Dorsolateral prefrontal cortex (tissue), 120 donors: ENCODE measurements at regions of chr15 and their contacts with region 1.

Region 1: GRCh38 chr15:44738340-44738984 is 2.1 kb downstream of the TRIM69 start:
- DNase-seq: no peak
- H3K4me3 ChIP-seq: no peak overlapping the region
- H3K27ac ChIP-seq: peak overlapping the region in 6 of 59 donors; percentile 18 to 64 (median 52)
- H3K27me3 ChIP-seq: no peaks in the 10 kb centered on the region
- CTCF ChIP-seq: peak; percentile 49 to 86 (median 70)

Region 2: DNA sequence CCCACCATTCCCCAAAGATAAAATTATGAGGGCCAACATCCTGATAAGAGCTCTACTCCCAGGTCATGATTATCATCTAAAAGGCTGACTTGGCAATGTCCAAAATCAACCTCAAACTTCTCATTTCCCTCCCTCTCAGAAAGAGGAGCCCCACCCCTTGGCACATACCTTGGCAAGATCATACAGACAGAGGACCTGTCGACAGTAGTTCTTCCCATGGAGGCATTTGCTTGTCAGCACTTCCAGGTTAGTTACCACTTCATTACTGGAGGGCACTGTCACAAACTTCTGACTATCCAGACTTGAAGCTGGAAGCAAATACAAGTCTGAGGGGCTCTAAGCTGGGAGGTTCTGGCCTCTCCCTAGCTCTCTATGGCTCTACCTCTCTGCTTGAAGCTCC is 163.7 kb before region 1 on chr15:
- intact Hi-C with region 1: loop called in 1 of 2 experiments (anchors 5 kb)
- DNase-seq: no peak
- H3K4me3 ChIP-seq: no peak overlapping the region
- H3K27ac ChIP-seq: no peak overlapping the region
- H3K27me3 ChIP-seq: no peaks in the 10 kb centered on the region
- CTCF ChIP-seq: no peak

Region 3: DNA sequence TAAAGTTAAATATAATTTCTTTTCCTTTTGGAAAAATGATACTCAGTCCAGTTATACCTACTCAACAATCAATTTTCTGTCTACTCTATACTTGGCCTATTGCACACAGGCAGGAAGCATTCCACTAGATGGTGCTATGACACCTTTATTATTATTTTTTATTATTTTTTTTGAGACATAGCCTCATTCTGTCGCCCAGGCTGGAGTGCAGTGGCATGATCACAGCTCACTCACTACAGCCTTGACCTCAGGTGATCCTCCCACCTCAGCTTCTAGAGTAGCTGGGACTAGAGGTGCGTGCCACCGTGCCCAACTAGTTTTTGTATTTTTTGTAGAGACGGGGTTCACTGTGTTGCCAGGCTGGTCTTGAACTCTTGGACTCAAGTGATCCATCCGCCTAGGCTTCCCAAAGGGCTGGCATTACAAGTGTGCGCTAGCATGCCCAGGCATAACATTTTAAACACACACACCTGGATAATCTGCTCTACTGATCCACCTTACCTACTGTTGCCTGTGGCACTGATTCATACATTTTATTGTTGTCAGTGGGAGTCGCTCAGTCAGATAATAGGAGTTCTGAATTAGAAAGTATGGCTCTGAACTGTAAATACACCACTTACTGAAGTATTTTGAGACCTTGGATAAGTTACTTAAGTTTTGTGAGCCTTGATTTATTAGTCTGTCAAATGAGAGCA is 145.3 kb before region 1 on chr15:
- intact Hi-C with region 1: no loop called
- DNase-seq: no peak
- H3K4me3 ChIP-seq: no peak overlapping the region
- H3K27ac ChIP-seq: no peak overlapping the region
- H3K27me3 ChIP-seq: no peaks in the 10 kb centered on the region
- CTCF ChIP-seq: peak in 53 of 56 donors; percentile 7 to 57 (median 38)

Region 4: DNA sequence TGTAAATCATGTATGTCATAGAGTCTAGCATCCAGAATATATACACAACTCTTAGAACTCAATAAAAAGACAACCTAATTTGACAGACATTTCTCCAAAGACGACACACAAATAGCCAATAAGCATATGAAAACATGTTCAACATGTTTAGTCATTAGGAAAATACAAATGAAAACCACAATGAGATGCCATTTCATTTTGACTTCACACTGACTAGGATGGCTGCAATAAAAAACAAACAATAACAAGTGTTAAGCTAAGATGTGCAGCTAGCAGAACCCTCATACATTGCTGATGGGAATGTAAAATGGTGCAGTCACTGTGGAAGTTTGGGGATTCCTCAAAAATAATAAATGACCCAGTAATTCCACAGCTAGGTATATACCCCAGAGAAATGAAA is 91.4 kb before region 1 on chr15:
- intact Hi-C with region 1: no loop called
- DNase-seq: no peak
- H3K4me3 ChIP-seq: no peak overlapping the region
- H3K27ac ChIP-seq: no peak overlapping the region
- H3K27me3 ChIP-seq: no peaks in the 10 kb centered on the region
- CTCF ChIP-seq: no peak

Region 5: DNA sequence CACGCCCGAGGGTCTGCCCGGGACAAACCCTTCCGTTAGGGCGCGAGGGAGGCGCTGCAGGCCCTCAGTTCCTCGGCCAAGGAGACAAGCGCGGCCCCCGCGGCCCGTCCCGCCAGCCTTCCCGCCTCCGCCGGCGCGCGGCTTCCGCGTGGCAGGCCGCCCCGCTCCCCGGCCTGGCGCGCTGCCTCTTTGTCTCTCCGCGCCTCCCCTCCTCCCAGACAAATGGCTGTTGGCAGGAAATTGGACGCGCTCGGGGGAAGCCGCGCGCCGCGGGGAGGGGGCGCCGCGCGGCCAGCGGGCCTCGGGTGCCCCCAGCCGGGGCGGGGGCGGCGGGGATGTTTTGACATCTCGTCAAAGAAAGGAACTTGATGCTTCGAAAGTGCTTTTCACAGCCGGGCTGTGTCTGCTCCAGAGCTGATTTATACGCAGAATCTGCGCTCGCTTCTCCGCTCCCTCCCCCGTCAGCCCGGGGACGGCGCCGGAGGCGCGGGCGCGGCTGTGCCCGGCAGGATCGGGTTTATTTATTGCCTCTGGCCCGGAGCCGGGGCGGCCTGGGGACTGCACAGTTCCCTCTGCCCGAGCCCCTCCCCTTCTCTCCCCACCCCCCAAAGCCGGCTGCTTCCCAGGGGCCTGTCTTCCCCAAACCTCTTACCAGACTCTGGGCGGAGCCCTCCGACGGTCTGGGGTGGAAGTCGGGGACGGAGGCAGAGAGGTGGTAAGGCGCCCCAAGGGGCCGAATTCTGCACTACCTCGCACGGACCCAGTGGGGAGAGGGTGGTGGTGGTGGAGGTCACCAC is 428.6 kb after region 1 on chr15:
- intact Hi-C with region 1: no loop called
- DNase-seq: peak; percentile 59 to 89 (median 77)
- H3K4me3 ChIP-seq: peak overlapping the region; percentile 59 to 91 (median 75)
- H3K27ac ChIP-seq: peak overlapping the region; percentile 96 to 100 (median 99)
- H3K27me3 ChIP-seq: no peaks in the 10 kb centered on the region
- CTCF ChIP-seq: peak in 54 of 56 donors; percentile 18 to 70 (median 48)